MCF 10A (cell line): ENCODE measurements at regions of chr1 and their contacts with region 1.

Region 1: DNA sequence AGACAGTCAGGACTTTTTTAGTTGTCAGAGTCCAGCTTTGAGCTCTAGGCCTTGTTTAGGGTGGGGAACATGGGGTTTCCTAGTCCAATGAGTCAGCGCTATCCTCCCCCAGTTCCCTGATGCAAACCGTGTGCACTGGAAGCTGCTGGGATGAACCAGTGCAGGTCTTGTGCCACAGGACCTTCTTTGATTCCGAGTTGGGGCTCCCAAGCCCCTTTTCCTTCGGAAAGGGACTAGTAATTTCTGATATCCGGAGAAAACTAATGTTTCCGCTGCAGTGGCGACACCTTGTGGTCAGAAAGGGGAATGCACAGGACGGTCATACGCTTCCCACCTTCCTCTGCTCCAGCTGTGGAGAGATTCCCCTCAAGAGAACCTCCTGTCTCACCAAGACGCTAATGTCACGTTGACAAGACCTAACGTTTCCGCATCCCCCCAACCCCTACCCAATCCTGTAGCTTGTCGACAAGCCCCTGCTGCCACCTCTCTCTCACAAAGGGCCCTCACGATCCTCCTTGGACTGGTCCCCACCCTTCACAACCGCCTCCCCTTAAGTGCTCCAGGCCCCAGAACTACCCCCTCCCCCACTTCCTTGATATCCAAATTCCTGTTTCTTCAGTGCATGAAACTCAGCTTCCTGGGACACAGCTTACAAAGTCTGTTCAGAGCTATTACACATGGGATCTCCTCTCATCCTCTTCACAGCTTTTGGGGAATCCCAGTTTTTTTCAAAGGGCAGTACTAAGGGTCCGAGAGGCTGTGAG is 30.9 kb downstream of the GPA33 start:
- DNase-seq: peak; percentile 79
- H3K4me3 Mint-ChIP-seq: no peak overlapping the region
- H3K27ac Mint-ChIP-seq: no peak overlapping the region
- H3K4me1 Mint-ChIP-seq: peaks cover 5% of the 10 kb centered on the region
- H3K27me3 Mint-ChIP-seq: no peaks in the 10 kb centered on the region
- CTCF ChIP-seq: peak; percentile 99

Region 2: GRCh38 chr1:166479052-166479631 is 580.1 kb before region 1 on chr1:
- CTCF ChIA-PET with region 1: interaction called, 12 read pairs
- POLR2A ChIA-PET with region 1: no interaction called
- intact Hi-C with region 1: loop called (anchors 1 kb)
- DNase-seq: peak; percentile 71
- H3K4me3 Mint-ChIP-seq: no peak overlapping the region
- H3K27ac Mint-ChIP-seq: no peak overlapping the region
- H3K4me1 Mint-ChIP-seq: no peaks in the 10 kb centered on the region
- H3K27me3 Mint-ChIP-seq: peaks cover 29% of the 10 kb centered on the region
- CTCF ChIP-seq: peak; percentile 89

Region 3: GRCh38 chr1:166859597-166859996 is 199.6 kb before region 1 on chr1:
- CTCF ChIA-PET with region 1: interaction called, 23 read pairs
- POLR2A ChIA-PET with region 1: interaction called, 3 read pairs
- intact Hi-C with region 1: no loop called
- DNase-seq: no peak
- H3K4me3 Mint-ChIP-seq: no peak overlapping the region
- H3K27ac Mint-ChIP-seq: no peak overlapping the region
- H3K4me1 Mint-ChIP-seq: no peaks in the 10 kb centered on the region
- H3K27me3 Mint-ChIP-seq: no peaks in the 10 kb centered on the region
- CTCF ChIP-seq: no peak

Region 4: DNA sequence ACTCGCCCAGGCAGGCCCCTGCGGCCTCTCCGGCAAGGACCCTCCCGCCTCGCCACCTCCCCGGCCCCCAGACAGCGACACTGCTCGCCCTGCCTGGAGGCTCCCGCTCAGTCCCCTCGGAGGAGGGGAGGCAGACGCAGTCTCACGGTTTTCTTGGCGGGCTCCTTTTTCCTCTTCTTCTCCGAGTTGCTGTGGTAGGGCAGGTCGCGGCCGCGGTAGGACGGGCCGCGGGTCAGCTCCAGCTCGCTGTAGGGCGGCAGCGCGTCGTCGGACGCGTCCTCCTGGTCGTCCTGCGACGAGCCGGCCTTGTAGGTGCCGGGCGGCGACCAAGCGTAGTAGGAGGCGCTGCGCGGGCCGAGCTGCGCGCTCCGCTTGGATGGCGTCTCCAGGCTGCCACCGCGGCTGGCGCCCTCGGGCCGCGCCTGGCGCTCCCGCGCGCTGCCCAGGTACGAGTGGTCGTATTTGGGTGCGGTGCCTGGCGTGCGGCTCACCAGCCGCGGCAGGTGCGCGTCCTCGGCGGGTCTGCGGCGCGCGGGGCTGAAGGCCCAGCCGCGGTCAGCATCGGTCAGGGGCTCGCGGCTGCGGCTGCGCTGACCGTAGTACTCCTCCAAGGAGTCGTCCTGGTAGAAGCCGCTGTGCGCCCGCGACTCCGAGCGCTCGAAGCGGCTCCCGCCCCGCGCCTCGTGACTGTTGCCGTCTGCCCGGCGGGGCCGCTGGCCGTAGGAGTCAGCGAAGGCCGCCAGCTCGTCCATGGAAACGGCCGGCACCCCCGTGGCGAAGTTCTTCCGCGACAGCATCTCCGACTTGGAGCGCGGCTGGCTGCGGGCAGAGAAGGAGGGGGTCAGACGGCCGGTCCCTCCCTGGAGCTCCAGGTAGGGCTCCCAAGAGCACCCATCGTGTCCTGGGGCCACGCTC is 138.4 kb before region 1 on chr1:
- CTCF ChIA-PET with region 1: interaction called, 1,662 read pairs
- POLR2A ChIA-PET with region 1: no interaction called
- intact Hi-C with region 1: no loop called
- DNase-seq: no peak
- H3K4me3 Mint-ChIP-seq: no peak overlapping the region
- H3K27ac Mint-ChIP-seq: no peak overlapping the region
- H3K4me1 Mint-ChIP-seq: peaks cover 8% of the 10 kb centered on the region
- H3K27me3 Mint-ChIP-seq: no peaks in the 10 kb centered on the region
- CTCF ChIP-seq: no peak

Region 5: GRCh38 chr1:166975361-166976129 is 83.7 kb before region 1 on chr1 and contains the start of gene ILDR2:
- CTCF ChIA-PET with region 1: interaction called, 76 read pairs
- POLR2A ChIA-PET with region 1: interaction called, 3 read pairs
- intact Hi-C with region 1: loop called (anchors 1 kb)
- DNase-seq: peak; percentile 26
- H3K4me3 Mint-ChIP-seq: peak within 1 kb of the TSS; percentile 68
- H3K27ac Mint-ChIP-seq: no peak within 1 kb of the TSS
- H3K4me1 Mint-ChIP-seq: peaks cover 25% of the 10 kb centered on the region
- H3K27me3 Mint-ChIP-seq: peaks cover 76% of the 10 kb centered on the region
- CTCF ChIP-seq: no peak
- total RNA-seq, gene ILDR2: 0.42 TPM in 2 replicates

Region 6: DNA sequence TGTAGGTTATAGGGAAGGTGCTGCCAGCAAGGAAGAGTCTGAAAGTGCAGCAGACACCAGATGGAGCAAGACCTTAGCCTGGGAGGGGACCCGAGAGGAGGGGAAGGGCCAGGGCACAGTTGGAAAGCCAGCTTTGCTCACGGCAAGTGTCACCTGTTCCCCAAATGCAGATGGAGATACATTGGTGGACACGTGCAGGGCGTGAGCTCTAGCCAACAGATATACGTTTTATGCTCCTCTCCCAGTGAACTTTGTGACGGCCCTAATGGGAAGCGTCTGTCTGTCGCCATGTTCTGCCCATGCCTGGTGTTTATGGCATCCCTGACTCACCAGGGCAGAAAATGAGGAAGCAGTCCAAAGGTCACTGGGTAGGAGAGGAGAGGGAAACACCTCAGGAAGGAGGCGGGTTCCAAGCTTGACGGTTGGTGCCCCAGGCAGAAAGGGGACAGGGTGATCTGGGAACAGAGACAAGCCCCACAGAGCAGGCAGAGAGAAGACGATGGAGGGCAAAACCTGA is 23.3 kb after region 1 on chr1:
- CTCF ChIA-PET with region 1: interaction called, 16 read pairs
- POLR2A ChIA-PET with region 1: no interaction called
- intact Hi-C with region 1: no loop called
- DNase-seq: peak; percentile 38
- H3K4me3 Mint-ChIP-seq: no peak overlapping the region
- H3K27ac Mint-ChIP-seq: no peak overlapping the region
- H3K4me1 Mint-ChIP-seq: no peaks in the 10 kb centered on the region
- H3K27me3 Mint-ChIP-seq: peaks cover 35% of the 10 kb centered on the region
- CTCF ChIP-seq: no peak

Region 7: DNA sequence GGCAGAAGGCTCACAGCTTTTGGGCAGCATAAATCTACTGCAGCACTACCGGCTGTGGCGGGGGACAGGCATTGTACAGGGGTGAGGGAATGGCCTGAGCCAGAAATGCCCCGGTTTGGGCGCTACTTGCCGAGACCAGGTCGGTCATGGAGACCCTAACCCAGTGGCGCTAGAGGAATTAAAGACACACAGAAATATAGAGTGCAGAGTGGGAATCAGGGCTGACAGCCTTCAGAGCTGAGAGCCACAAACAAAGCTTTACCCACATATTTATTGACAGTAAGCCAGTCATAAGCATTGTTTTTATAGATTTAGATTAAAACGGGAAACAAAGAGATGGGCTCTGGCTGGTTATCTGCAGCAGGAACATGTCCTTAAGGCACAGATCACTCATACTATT is 263.3 kb after region 1 on chr1:
- CTCF ChIA-PET with region 1: no interaction called
- POLR2A ChIA-PET with region 1: no interaction called
- intact Hi-C with region 1: no loop called
- DNase-seq: no peak
- H3K4me3 Mint-ChIP-seq: no peak overlapping the region
- H3K27ac Mint-ChIP-seq: no peak overlapping the region
- H3K4me1 Mint-ChIP-seq: no peaks in the 10 kb centered on the region
- H3K27me3 Mint-ChIP-seq: no peaks in the 10 kb centered on the region
- CTCF ChIP-seq: no peak

Region 8: GRCh38 chr1:167442124-167442848 is 383.1 kb after region 1 on chr1:
- CTCF ChIA-PET with region 1: interaction called, 51 read pairs
- POLR2A ChIA-PET with region 1: no interaction called
- intact Hi-C with region 1: no loop called
- DNase-seq: peak; percentile 94
- H3K4me3 Mint-ChIP-seq: no peak overlapping the region
- H3K27ac Mint-ChIP-seq: no peak overlapping the region
- H3K4me1 Mint-ChIP-seq: peaks cover 6% of the 10 kb centered on the region
- H3K27me3 Mint-ChIP-seq: peaks cover 18% of the 10 kb centered on the region
- CTCF ChIP-seq: peak; percentile 98